ENCODE measurements at regions of chr2 and their contacts with region 1.

Region 1: GRCh38 chr2:130342533-130343275 is at the start of gene IMP4:
- DNase-seq: peak; percentile 96
- H3K4me3 Mint-ChIP-seq: peak within 1 kb of the TSS; percentile 100
- H3K27ac Mint-ChIP-seq: peak within 1 kb of the TSS; percentile 97
- H3K4me1 Mint-ChIP-seq: peaks cover 15% of the 10 kb centered on the region
- H3K27me3 Mint-ChIP-seq: no peaks in the 10 kb centered on the region
- total RNA-seq, gene IMP4: 136 and 142 TPM in 2 replicates

Region 2: DNA sequence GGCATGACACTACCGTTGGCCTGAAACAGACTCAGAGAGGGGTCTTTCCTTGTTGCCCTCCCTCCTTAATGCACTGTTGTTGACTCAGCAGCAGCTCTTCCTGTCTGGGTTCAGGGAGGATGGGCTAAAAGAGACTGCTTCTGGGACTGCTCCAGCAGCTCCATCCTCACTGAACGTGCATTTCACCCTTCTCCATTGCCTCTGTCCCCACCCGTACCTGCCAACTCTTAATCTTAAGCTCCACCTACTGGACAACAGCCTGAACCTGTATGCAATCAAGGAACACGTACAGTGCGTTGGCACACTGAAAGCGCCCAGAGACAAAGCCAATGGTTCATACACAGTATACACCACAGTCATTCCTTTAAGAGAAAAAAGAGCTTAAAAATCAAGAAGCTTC is 594.1 kb before region 1 on chr2:
- intact Hi-C with region 1: no loop called
- DNase-seq: no peak
- H3K4me3 Mint-ChIP-seq: no peak overlapping the region
- H3K27ac Mint-ChIP-seq: no peak overlapping the region
- H3K4me1 Mint-ChIP-seq: no peaks in the 10 kb centered on the region
- H3K27me3 Mint-ChIP-seq: no peaks in the 10 kb centered on the region

Region 3: GRCh38 chr2:130181325-130181879 is 161.3 kb before region 1 on chr2 and contains the start of gene SMPD4:
- intact Hi-C with region 1: loop called (anchors 1 kb)
- DNase-seq: peak; percentile 95
- H3K4me3 Mint-ChIP-seq: peak within 1 kb of the TSS; percentile 92
- H3K27ac Mint-ChIP-seq: peak within 1 kb of the TSS; percentile 95
- H3K4me1 Mint-ChIP-seq: peaks cover 9% of the 10 kb centered on the region
- H3K27me3 Mint-ChIP-seq: no peaks in the 10 kb centered on the region
- total RNA-seq, gene SMPD4: 84.3 and 84.8 TPM in 2 replicates

Region 4: DNA sequence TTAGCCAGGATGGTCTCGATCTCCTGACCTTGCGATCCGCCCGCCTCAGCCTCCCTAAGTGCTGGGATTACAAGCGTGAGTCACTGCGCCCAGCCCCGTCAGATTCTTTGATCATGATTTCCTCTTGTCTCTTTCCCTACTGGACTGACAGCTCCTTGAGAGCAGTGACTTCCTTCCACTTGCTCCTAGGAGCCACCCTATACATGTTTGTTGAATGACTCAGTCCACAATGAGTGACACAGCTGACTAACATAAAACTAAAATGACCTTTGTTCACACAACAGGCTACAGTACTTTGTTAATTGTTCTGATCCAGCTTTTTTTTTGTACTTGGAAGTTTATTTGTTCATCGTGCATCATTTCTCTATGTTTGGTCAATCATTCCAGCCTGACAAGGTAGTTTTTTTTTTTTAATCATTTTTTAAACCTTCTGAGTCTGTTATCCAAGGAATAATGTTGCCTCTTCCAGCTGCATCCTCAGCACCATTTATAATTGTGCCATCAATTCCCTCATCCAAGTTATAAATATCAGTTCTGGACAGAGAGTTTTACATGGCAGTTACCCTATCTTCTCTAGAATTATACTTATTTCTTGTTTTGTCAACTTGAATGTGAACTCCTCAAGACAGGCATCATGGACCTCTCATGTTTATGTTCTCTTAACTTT is 101.5 kb before region 1 on chr2:
- intact Hi-C with region 1: no loop called
- DNase-seq: no peak
- H3K4me3 Mint-ChIP-seq: no peak overlapping the region
- H3K27ac Mint-ChIP-seq: no peak overlapping the region
- H3K4me1 Mint-ChIP-seq: no peaks in the 10 kb centered on the region
- H3K27me3 Mint-ChIP-seq: peaks cover 2% of the 10 kb centered on the region

Region 5: GRCh38 chr2:130316596-130316995 is 26.1 kb before region 1 on chr2:
- intact Hi-C with region 1: no loop called
- DNase-seq: no peak
- H3K4me3 Mint-ChIP-seq: no peak overlapping the region
- H3K27ac Mint-ChIP-seq: no peak overlapping the region
- H3K4me1 Mint-ChIP-seq: no peaks in the 10 kb centered on the region
- H3K27me3 Mint-ChIP-seq: peaks cover 2% of the 10 kb centered on the region

Region 6: GRCh38 chr2:130355578-130356431 is 13.1 kb after region 1 on chr2 and contains the start of gene PTPN18:
- intact Hi-C with region 1: loop called (anchors 1 kb)
- DNase-seq: peak; percentile 55
- H3K4me3 Mint-ChIP-seq: peak within 1 kb of the TSS; percentile 81
- H3K27ac Mint-ChIP-seq: no peak within 1 kb of the TSS
- H3K4me1 Mint-ChIP-seq: peaks cover 13% of the 10 kb centered on the region
- H3K27me3 Mint-ChIP-seq: peaks cover 2% of the 10 kb centered on the region
- total RNA-seq, gene PTPN18: 72.6 and 72.9 TPM in 2 replicates

Region 7: GRCh38 chr2:130372055-130372832 is 29.5 kb after region 1 on chr2:
- intact Hi-C with region 1: loop called (anchors 1 kb)
- DNase-seq: peak; percentile 69
- H3K4me3 Mint-ChIP-seq: peak overlapping the region; percentile 92
- H3K27ac Mint-ChIP-seq: peak overlapping the region; percentile 89
- H3K4me1 Mint-ChIP-seq: peaks cover 51% of the 10 kb centered on the region
- H3K27me3 Mint-ChIP-seq: peaks cover 1% of the 10 kb centered on the region

Region 8: DNA sequence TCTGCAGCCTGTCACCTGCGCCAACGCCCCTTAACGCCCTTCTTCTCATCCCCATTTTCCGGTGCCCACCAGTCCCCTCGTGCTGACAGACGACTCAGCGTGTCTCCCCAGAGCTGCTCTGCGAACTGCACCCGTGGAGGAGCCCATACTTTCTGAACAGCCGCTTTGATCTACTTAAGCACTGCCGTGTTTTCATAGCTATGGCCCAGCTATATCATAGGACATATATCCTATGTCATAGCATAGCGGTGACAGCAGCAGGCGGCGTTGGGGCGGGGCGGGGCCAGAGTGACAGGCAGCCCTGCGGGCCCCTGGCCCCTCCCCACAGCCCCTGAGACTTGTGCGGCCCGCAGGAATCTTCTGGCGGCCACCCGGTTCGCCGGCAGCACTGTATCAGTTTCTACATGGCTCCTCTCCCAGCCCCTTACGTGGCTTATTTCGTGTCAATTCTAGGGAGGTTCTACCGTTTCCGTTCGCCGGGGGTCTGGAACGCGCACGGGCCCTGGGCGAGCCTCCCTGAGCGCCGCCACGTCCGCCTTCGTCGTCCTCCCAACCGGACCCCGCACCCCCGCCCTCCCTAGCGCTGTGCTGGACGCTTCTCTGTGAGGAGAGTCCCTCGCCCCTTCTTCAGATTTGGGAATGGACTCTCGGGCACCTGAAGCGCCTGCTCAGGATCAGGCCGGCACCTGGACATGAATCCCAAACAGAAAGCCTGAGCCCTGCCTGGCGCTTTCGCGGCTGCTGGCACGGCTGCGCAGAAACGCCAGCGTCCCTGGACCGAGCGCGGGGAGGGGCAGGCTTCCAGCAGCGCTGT is 48.6 kb after region 1 on chr2:
- intact Hi-C with region 1: loop called (anchors 1 kb)
- DNase-seq: peak; percentile 59
- H3K4me3 Mint-ChIP-seq: peak overlapping the region; percentile 83
- H3K27ac Mint-ChIP-seq: peak overlapping the region; percentile 86
- H3K4me1 Mint-ChIP-seq: peaks cover 11% of the 10 kb centered on the region
- H3K27me3 Mint-ChIP-seq: peaks cover 5% of the 10 kb centered on the region

Region 9: GRCh38 chr2:131093006-131093695 is 750.4 kb after region 1 on chr2 and contains the start of gene FAM168B:
- intact Hi-C with region 1: loop called (anchors 5 kb)
- DNase-seq: peak; percentile 87
- H3K4me3 Mint-ChIP-seq: peak within 1 kb of the TSS; percentile 90
- H3K27ac Mint-ChIP-seq: peak within 1 kb of the TSS; percentile 82
- H3K4me1 Mint-ChIP-seq: peaks cover 12% of the 10 kb centered on the region
- H3K27me3 Mint-ChIP-seq: no peaks in the 10 kb centered on the region
- total RNA-seq, gene FAM168B: 69.0 and 70.3 TPM in 2 replicates

Region 10: DNA sequence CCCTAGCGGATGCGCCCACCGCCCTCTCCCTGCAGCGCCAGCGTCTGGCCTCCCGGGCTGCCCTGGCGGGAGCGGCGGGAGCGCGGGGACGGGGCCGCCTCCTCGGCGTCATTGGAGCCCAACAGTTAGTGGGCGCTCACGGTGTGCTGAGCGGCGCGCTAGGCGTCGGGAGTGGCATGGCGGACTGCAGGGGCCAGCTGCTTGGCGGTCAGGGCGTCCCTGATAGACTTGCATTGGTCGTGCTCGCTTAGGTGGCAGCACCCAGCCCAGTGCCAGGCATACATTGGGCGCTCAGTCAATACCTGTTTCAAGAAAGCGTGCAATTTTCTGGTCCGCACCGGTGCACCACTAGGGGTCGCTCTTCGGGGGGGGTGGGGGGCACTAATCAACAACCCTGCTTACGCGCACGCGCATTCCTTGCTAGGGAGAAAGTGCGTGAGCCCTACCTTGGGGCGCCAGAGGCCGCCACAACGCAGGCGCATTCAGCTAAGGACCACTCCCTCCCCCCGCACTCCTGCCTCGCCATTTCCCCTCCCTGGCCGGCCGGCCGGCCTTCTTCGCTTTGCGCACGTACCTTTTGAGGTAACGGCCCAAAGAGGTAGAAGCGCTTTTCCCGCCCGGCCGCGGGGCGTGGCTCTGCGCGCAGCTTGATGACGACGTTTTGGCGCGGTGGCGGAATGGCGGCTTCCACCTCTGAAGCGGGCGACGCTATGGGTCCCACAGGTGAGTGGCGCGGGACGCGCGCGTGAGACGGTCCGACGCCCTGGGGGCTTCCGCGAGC is 1149.9 kb after region 1 on chr2:
- intact Hi-C with region 1: loop called (anchors 2 kb)
- DNase-seq: peak; percentile 90
- H3K4me3 Mint-ChIP-seq: peak overlapping the region; percentile 99
- H3K27ac Mint-ChIP-seq: peak overlapping the region; percentile 98
- H3K4me1 Mint-ChIP-seq: peaks cover 21% of the 10 kb centered on the region
- H3K27me3 Mint-ChIP-seq: no peaks in the 10 kb centered on the region